Activated naive CD4-positive, alpha-beta T cell treated with anti-CD3 and anti-CD28 coated beads for 36 hours (primary cell): ENCODE measurements at regions of chr3 and their contacts with region 1.

Region 1: GRCh38 chr3:14947886-14948555 is 638 bp downstream of the NR2C2 start:
- DNase-seq: peak; percentile 97
- H3K4me3 Mint-ChIP-seq: peak overlapping the region; percentile 99
- H3K27ac Mint-ChIP-seq: peak overlapping the region; percentile 100
- H3K4me1 Mint-ChIP-seq: peaks cover 42% of the 10 kb centered on the region
- H3K27me3 Mint-ChIP-seq: no peaks in the 10 kb centered on the region

Region 2: GRCh38 chr3:14178247-14179113 is 769.5 kb before region 1 on chr3 and contains the starts of genes LSM3 and XPC:
- CTCF ChIA-PET with region 1: no interaction called
- intact Hi-C with region 1: loop called (anchors 1 kb)
- DNase-seq: peak; percentile 97
- H3K4me3 Mint-ChIP-seq: peak within 1 kb of the TSS; percentile 96
- H3K27ac Mint-ChIP-seq: peak within 1 kb of the TSS; percentile 98
- H3K4me1 Mint-ChIP-seq: peaks cover 63% of the 10 kb centered on the region
- H3K27me3 Mint-ChIP-seq: no peaks in the 10 kb centered on the region
- total RNA-seq, gene LSM3: 26.1 to 26.2 TPM
- total RNA-seq, gene XPC: 39.0 to 39.8 TPM

Region 3: GRCh38 chr3:14431892-14432834 is 515.9 kb before region 1 on chr3:
- CTCF ChIA-PET with region 1: no interaction called
- intact Hi-C with region 1: loop called (anchors 2 kb)
- DNase-seq: peak; percentile 98
- H3K4me3 Mint-ChIP-seq: peak overlapping the region; percentile 66
- H3K27ac Mint-ChIP-seq: peak overlapping the region; percentile 94
- H3K4me1 Mint-ChIP-seq: peaks cover 76% of the 10 kb centered on the region
- H3K27me3 Mint-ChIP-seq: no peaks in the 10 kb centered on the region

Region 4: GRCh38 chr3:14959359-14959943 is 11.4 kb after region 1 on chr3:
- CTCF ChIA-PET with region 1: no interaction called
- intact Hi-C with region 1: loop called (anchors 1 kb)
- DNase-seq: no peak
- H3K4me3 Mint-ChIP-seq: peak overlapping the region; percentile 62
- H3K27ac Mint-ChIP-seq: peak overlapping the region; percentile 88
- H3K4me1 Mint-ChIP-seq: peaks cover 51% of the 10 kb centered on the region
- H3K27me3 Mint-ChIP-seq: no peaks in the 10 kb centered on the region

Region 5: GRCh38 chr3:15051531-15051930 is 103.5 kb after region 1 on chr3:
- CTCF ChIA-PET with region 1: no interaction called
- intact Hi-C with region 1: no loop called
- DNase-seq: peak; percentile 64
- H3K4me3 Mint-ChIP-seq: no peak overlapping the region
- H3K27ac Mint-ChIP-seq: peak overlapping the region; percentile 65
- H3K4me1 Mint-ChIP-seq: peaks cover 36% of the 10 kb centered on the region
- H3K27me3 Mint-ChIP-seq: no peaks in the 10 kb centered on the region

Region 6: GRCh38 chr3:15064835-15065549 is 117.0 kb after region 1 on chr3 and contains the start of gene MRPS25:
- CTCF ChIA-PET with region 1: no interaction called
- intact Hi-C with region 1: loop called (anchors 1 kb)
- DNase-seq: peak; percentile 93
- H3K4me3 Mint-ChIP-seq: peak within 1 kb of the TSS; percentile 96
- H3K27ac Mint-ChIP-seq: peak within 1 kb of the TSS; percentile 87
- H3K4me1 Mint-ChIP-seq: peaks cover 25% of the 10 kb centered on the region
- H3K27me3 Mint-ChIP-seq: no peaks in the 10 kb centered on the region
- total RNA-seq, gene MRPS25: 55.0 to 57.5 TPM

Region 7: GRCh38 chr3:15361494-15362212 is 413.6 kb after region 1 on chr3:
- CTCF ChIA-PET with region 1: no interaction called
- intact Hi-C with region 1: loop called (anchors 5 kb)
- DNase-seq: peak; percentile 86
- H3K4me3 Mint-ChIP-seq: no peak overlapping the region
- H3K27ac Mint-ChIP-seq: peak overlapping the region; percentile 83
- H3K4me1 Mint-ChIP-seq: peaks cover 42% of the 10 kb centered on the region
- H3K27me3 Mint-ChIP-seq: peaks cover 2% of the 10 kb centered on the region

Region 8: DNA sequence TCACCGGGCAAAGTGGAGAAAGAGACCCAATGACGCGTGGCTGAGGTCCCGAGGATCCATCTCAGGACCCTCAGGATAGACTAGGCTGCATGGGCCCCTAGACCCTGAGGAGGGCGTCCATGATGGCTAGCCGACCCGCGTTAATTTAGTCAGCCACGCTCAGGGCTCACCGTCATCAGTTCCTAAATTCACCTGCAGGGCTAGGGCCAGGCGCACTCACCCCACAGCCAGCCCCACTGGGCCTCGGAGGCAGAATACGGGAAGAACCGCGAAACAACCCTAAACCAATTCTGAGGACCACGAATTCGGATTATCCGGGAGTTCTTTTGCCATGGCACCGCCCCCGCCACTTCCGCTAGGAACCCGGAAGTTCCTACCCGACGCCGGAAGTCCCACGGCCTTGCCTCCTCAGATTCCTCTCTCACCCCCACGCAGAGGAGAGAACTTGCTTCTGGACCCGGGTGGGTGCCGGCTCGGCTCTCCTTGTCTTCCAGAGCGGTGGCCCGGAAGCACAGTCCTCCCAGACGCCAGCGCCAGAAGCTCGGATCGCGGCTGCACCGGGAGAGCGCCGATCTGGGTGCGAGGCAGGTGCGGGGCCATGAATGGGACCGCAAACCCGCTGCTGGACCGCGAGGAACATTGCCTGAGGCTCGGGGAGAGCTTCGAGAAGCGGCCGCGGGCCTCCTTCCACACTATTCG is 479.3 kb after region 1 on chr3 and contains the starts of genes EAF1 and METTL6:
- CTCF ChIA-PET with region 1: no interaction called
- intact Hi-C with region 1: loop called (anchors 5 kb)
- DNase-seq: peak; percentile 92
- H3K4me3 Mint-ChIP-seq: peak within 1 kb of the TSS; percentile 90
- H3K27ac Mint-ChIP-seq: peak within 1 kb of the TSS; percentile 91
- H3K4me1 Mint-ChIP-seq: peaks cover 41% of the 10 kb centered on the region
- H3K27me3 Mint-ChIP-seq: no peaks in the 10 kb centered on the region
- total RNA-seq, gene EAF1: 19.5 to 20.6 TPM
- total RNA-seq, gene METTL6: 12.5 to 14.0 TPM